Right ventricle myocardium inferior (tissue), 1 donor: ENCODE measurements at regions of chr2 and their contacts with region 1.

Region 1: DNA sequence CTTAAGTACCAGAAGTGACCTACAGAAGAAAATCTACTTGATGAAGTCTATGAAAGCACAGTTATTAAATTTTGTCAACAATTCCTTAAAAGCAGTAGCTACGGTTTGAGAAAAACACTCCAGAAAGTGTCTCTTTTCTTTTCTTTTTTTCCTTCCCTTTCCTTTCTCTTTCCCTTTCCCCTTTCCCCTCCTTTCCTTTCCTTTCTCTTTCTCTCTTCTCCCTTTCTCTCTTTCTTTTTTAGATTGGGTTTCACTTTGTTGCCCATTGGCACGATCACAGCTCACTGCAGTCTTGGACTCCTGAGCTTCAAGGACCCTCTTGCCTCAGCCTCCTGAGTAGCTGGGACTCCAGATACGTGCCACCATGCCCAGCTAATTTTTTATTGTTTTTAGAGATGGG is 2.6 kb upstream of the ALMS1 start:
- DNase-seq: no peak
- ATAC-seq: no peak

Region 2: DNA sequence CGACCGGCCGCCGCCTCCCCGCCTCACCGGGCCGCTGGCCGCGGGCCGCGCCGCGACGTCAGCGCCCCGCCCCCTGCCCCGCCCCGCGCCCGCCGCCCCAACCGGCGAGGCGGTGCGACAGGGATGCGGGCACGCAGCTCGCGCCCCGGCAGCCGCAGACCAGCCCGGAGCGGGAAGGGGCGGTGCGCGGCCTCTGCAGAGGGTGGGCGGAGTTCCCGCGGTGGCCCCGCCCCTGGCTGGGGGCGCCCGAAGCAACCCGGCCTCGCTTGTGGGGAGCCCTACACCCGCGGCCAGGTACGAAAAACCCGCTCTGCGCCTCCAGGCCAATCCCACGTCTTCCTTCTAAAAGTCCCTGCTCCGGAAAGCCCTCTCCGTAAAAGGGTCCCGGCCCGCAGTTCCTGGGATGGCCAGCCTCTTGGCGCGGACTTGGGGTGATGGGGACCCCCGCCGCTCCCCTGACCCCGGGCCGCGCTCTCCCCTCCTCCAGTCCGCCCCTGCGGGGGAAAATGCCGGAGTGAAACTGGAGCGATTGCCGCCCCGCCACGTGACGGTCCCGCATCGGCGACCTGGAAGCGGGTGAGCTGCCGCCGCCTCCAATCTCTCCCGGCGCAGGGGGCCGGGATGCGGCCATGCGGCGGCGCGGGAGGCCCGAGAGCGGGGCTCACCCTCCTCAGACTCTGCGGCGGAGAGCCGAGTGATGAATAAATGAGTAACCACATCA is 270.0 kb before region 1 on chr2 and contains the start of gene RAB11FIP5:
- intact Hi-C with region 1: loop called (anchors 5 kb)
- DNase-seq: peak; percentile 88
- ATAC-seq: peak; percentile 90
- total RNA-seq, gene RAB11FIP5: 19.0 TPM

Region 3: GRCh38 chr2:73187549-73187948 is 195.5 kb before region 1 on chr2:
- intact Hi-C with region 1: no loop called
- DNase-seq: no peak
- ATAC-seq: no peak